Left cardiac atrium (tissue), 4 donors: ENCODE measurements at regions of chr15 and their contacts with region 1.

Region 1: GRCh38 chr15:69394556-69395282 is 19.4 kb upstream of the KIF23 start:
- DNase-seq: peak; percentile 85
- ATAC-seq: peak; percentile 90 to 92

Region 2: GRCh38 chr15:69209661-69210060 is 185.1 kb before region 1 on chr15:
- intact Hi-C with region 1: no loop called
- DNase-seq: no peak
- ATAC-seq: no peak

Region 3: DNA sequence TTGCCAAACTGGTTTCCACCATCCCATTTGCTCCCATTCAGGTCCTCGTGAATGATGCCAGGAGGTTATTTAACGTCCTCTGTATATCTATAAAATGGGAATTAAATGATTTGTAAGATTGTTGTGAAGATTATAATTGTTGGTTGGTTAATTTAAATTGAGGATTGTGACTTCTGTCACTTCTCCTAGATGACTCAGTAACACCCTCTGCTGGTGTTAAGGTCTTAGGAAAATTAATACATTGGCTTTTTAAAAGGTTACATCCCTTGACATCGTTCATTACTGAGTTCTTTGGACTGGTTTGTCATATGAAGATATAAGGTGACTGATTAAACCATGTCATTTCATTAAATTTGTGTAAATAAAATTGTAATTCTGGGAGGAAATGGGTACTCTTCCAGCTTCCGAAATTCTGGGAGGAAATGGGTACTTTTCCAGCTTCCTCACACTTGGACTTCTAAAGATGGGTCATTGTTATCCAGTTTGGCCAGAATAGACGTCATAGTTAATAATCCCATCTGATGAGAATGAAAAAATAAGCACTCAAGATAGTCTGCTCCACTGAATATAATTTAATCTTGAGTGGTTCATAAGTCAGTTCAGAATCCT is 129.3 kb before region 1 on chr15:
- intact Hi-C with region 1: loop called (anchors 10 kb)
- DNase-seq: no peak
- ATAC-seq: no peak

Region 4: DNA sequence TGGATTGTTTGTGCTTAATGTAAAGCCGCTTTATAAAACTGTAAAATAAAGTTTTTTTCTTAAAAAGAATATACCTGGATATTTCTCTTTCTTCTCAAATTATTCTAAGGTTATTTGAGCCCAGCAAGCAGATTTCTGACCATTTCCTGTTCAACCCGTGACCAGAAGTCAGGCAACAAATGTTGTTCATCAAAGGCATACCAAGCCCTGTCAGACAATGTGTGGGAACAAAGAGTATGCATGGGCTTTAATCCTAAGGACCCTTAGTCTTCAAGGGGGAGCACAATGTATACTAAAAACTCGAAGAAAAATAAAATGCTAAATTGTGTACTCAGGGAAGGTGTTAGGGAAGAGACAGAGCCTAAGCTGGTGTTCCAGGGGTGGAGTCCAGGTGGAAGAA is 122.6 kb before region 1 on chr15:
- intact Hi-C with region 1: loop called (anchors 10 kb)
- DNase-seq: no peak
- ATAC-seq: no peak